Aorta (tissue), 5 donors: ENCODE measurements at regions of chr9 and their contacts with region 1.

Region 1: GRCh38 chr9:29730163-29730562 is 2156.9 kb upstream of the C9orf72 start:
- DNase-seq: no peak
- ATAC-seq: no peak
- H3K4me3 ChIP-seq: no peak overlapping the region
- H3K27ac ChIP-seq: no peak overlapping the region
- H3K4me1 ChIP-seq: no peaks in the 10 kb centered on the region
- H3K27me3 ChIP-seq: no peaks in the 10 kb centered on the region

Region 2: DNA sequence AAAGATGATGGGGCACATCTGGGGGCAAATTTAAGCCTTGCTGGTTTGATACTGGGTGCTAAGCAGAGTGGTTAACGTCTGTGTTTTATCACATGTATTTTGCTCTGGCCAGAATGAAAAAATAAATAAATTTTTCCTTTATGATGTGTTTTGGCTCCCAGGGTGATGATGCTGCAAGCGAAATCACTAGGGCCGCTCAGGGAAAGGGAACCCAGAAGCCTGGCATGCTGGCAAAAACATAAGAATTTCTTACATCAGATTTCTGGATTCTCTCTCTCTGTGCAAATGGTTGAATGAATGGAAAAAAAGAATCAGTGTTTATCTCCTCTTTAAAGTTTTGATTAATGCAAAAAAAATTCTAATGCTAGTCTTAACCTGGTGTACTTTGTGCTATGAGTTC is 181.7 kb before region 1 on chr9:
- intact Hi-C with region 1: loop called in 1 of 2 experiments (anchors 10 kb)
- DNase-seq: no peak
- ATAC-seq: no peak
- H3K4me3 ChIP-seq: no peak overlapping the region
- H3K27ac ChIP-seq: no peak overlapping the region
- H3K4me1 ChIP-seq: no peaks in the 10 kb centered on the region
- H3K27me3 ChIP-seq: no peaks in the 10 kb centered on the region

Region 3: DNA sequence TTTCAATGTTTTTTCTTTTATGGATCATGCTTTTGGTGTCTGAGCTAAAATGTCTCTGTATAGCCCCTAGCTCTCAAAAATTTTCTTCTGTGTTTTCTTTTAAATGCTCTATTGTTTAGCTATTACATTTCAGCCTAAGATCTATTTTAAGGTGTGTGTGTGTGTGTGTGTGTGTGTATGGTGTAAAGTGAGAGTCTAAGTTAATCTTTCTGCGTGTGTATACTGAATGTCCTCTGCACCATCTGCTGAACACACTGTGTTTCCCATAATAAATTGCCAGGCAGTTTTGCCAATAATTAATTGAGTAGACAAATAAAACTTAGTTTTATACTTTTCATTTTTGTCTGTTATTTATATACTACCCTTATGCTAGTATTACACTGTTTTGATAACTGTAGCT is 60.5 kb before region 1 on chr9:
- intact Hi-C with region 1: loop called in 1 of 2 experiments (anchors 5 kb)
- DNase-seq: no peak
- ATAC-seq: no peak
- H3K4me3 ChIP-seq: no peak overlapping the region
- H3K27ac ChIP-seq: no peak overlapping the region
- H3K4me1 ChIP-seq: no peaks in the 10 kb centered on the region
- H3K27me3 ChIP-seq: no peaks in the 10 kb centered on the region